RWPE1 (cell line): ENCODE measurements at regions of chr1 and their contacts with region 1.

Region 1: DNA sequence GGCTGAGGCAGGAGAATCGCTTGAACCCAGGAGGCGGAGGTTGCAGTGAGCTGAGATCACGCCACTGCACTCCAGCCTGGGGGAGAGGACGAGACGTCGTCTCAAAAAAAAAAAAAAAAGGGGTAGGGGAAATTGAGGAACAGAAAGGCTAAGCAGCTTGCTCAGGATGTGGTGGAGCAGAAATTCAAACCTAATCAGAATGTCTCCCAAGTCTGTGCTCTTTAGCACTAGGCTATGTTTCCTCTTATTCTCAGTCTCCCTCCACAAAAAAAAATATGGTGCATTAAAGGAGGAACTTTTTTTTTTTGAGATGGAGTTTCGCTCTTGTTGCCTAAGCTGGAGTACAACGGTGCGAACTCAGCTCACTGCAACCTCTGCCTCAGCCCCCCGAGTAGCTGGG is 114.2 kb downstream of the SLC16A1 start:
- DNase-seq: no peak
- H3K27ac ChIP-seq: no peak overlapping the region
- CTCF ChIP-seq: no peak

Region 2: GRCh38 chr1:112540226-112540794 is 301.5 kb before region 1 on chr1:
- CTCF ChIA-PET with region 1: no interaction called
- POLR2A ChIA-PET with region 1: no interaction called
- DNase-seq: no peak
- H3K27ac ChIP-seq: no peak overlapping the region
- CTCF ChIP-seq: no peak

Region 3: GRCh38 chr1:113042285-113043143 is 200.7 kb after region 1 on chr1:
- CTCF ChIA-PET with region 1: interaction called, 11 read pairs
- POLR2A ChIA-PET with region 1: no interaction called
- DNase-seq: peak; percentile 72
- H3K27ac ChIP-seq: peak overlapping the region; percentile 61
- CTCF ChIP-seq: peak; percentile 65